ENCODE measurements at regions of chr2 and their contacts with region 1.

Region 1: GRCh38 chr2:55026202-55026601 is 24.0 kb downstream of the RTN4 start:
- DNase-seq: no peak
- ATAC-seq: no peak; the same call in 2 of the 3 replicates
- H3K4me3 ChIP-seq: peak overlapping the region; percentile 40; the same call in 1 of the 2 replicates
- H3K27ac ChIP-seq: peak overlapping the region; percentile 69
- H3K4me1 ChIP-seq: peaks cover 26% of the 10 kb centered on the region
- H3K27me3 ChIP-seq: no peaks in the 10 kb centered on the region
- CTCF ChIP-seq: no peak
- EP300 ChIP-seq: no peak
- POLR2A ChIP-seq: no peak
- RAD21 ChIP-seq: no peak

Region 2: DNA sequence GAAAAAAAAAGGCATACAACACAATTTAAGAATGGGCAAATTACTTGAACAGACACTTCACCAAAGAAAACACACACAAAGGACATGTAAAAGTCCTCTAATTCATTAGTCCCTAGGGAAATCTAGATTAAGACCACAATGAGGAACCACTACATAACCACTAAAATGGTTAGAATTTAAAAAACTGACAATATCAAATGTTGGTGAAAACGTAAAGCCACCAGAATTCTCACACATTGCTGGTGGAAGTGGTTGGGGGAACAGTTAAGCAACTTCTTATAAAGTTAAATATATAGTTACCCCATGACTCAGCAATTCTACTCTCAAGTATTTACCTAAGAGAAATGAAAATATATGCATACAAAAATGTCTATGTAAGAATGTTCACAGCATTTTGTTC is 12.2 kb after region 1 on chr2:
- CTCF ChIA-PET with region 1: interaction called, 8 read pairs
- POLR2A ChIA-PET with region 1: interaction called, 9 read pairs
- RAD21 ChIA-PET with region 1: interaction called, 7 read pairs
- SMC1A ChIA-PET with region 1: interaction called, 20 read pairs
- in situ Hi-C with region 1: no loop called
- intact Hi-C with region 1: no loop called
- DNase-seq: no peak
- ATAC-seq: no peak
- H3K4me3 ChIP-seq: no peak overlapping the region
- H3K27ac ChIP-seq: no peak overlapping the region
- H3K4me1 ChIP-seq: peaks cover 10% of the 10 kb centered on the region
- H3K27me3 ChIP-seq: no peaks in the 10 kb centered on the region
- CTCF ChIP-seq: no peak
- EP300 ChIP-seq: no peak
- POLR2A ChIP-seq: no peak
- RAD21 ChIP-seq: no peak

Region 3: GRCh38 chr2:55144922-55145820 is 119.0 kb after region 1 on chr2:
- CTCF ChIA-PET with region 1: no interaction called
- POLR2A ChIA-PET with region 1: no interaction called
- RAD21 ChIA-PET with region 1: no interaction called
- SMC1A ChIA-PET with region 1: no interaction called
- in situ Hi-C with region 1: no loop called
- intact Hi-C with region 1: no loop called
- DNase-seq: no peak
- ATAC-seq: no peak
- H3K4me3 ChIP-seq: no peak overlapping the region
- H3K27ac ChIP-seq: no peak overlapping the region
- H3K4me1 ChIP-seq: no peaks in the 10 kb centered on the region
- H3K27me3 ChIP-seq: no peaks in the 10 kb centered on the region
- CTCF ChIP-seq: no peak
- EP300 ChIP-seq: no peak
- POLR2A ChIP-seq: no peak
- RAD21 ChIP-seq: no peak

Region 4: DNA sequence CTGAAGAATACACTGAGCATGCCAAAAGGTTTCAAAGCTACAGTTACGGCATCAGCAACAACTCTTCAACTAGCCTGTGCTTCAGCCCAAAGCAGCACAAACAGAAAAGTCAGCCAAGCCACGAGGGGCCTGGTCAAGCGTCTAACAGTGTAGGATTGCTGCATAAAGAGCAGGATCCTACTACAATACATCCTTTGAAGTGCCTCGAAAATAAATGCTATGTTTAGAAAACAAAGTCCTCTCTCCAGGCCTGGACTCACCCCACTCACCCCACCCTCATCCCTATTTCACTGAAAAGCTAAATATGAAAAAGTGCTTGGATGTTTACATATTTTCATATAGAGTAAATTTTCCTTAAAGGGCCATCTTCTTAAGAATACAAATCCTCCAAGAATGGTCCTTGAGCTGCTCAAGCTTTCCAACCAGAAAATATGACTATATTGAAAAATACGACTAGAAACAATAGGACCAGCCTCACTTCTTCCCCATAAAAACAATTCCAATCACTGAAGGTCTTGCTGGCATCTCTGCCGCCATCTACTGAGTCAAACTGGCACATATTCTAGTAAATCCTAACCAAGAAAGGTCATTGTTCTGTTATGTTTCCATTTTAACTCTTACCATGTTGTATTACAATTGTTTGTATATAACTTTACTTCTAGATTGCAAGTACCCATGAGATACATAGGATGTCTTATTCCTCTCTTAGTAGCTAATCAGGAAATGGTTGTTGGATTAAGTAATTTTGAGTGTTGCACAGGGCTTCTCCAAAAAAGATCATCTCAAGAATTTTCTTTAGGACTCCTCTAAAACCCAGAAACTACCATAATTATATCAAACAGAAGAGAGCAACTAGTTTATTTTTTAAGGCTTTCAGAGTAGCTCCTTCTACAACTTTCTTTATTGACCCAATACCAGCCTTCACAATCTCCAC is 142.3 kb after region 1 on chr2:
- CTCF ChIA-PET with region 1: interaction called, 12 read pairs
- POLR2A ChIA-PET with region 1: no interaction called
- RAD21 ChIA-PET with region 1: interaction called, 8 read pairs
- SMC1A ChIA-PET with region 1: interaction called, 260 read pairs
- in situ Hi-C with region 1: no loop called
- intact Hi-C with region 1: no loop called
- DNase-seq: no peak
- ATAC-seq: peak; percentile 83
- H3K4me3 ChIP-seq: no peak overlapping the region
- H3K27ac ChIP-seq: no peak overlapping the region
- H3K4me1 ChIP-seq: no peaks in the 10 kb centered on the region
- H3K27me3 ChIP-seq: no peaks in the 10 kb centered on the region
- CTCF ChIP-seq: peak; percentile 73 to 74 (median 73)
- EP300 ChIP-seq: no peak
- POLR2A ChIP-seq: no peak
- RAD21 ChIP-seq: peak; percentile 89

Measured in GM12878 (cell line).